Posterior cingulate gyrus (tissue), 11 donors: ENCODE measurements at regions of chr15 and their contacts with region 1.

Region 1: GRCh38 chr15:43872416-43873020 is 45.7 kb downstream of the WDR76 start:
- DNase-seq: peak in 6 of 10 donors; percentile 34 to 91 (median 59)

Region 2: DNA sequence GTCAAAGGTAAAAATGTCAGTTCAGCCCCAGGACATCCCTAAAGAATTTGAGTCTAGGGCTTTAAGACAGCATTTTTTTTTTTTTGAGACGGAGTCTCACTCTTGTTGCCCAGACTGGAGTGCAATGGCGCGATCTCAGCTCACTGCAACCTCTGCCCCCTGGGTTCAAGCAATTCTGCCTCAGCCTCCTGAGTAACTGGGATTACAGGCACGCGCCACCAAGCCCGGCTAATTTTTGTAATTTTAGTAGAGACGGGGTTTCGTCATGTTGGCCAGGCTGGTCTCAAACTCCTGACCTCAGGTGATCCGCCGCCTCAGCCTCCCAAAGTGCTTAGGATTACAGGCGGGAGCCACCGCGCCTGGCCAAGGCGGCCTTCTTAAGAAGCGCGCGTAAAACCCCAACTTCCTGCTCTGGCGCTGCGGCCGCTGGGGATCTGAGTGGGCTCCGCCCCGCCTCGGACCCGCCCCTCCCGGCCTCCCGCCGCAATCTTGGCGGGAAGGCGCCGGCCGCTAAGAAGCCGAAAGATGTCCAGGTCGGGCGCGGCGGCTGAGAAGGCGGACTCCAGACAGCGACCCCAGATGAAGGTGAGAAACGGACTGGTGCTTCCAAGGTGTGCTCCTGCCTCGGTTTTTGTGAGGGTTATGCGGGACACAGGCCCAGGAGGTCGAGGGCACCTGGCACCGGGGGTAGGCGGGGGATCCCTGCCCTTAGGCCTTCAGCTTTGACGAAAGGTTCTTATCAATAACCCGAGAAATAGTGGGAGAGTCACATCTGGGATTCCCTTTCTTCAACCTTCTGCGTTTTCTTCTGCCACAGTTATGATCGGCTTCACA is 45.8 kb before region 1 on chr15 and contains the start of gene WDR76:
- intact Hi-C with region 1: no loop called
- DNase-seq: peak; percentile 27 to 94 (median 56)

Region 3: GRCh38 chr15:43939070-43939469 is 66.6 kb after region 1 on chr15:
- intact Hi-C with region 1: no loop called
- DNase-seq: no peak

Region 4: DNA sequence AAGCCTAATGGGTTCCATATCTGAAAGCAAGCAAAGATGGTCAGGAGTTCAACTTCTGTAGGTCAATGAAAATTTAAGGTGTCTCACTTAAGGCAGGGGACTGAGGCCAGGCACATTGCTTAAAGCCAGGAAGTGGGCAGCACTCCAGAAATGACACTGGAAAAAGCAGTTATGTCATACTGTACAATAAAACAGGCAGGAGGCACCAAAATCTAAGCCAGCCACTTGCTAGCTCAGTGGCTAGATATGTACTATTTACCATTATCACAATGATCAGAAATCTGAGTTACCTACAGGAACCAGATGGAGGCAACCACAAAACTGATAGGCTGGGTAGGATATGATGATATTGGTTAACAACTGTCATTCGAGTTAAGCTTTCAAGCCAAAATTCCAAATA is 265.2 kb after region 1 on chr15:
- intact Hi-C with region 1: loop called (anchors 10 kb)
- DNase-seq: no peak

Region 5: GRCh38 chr15:44219073-44219472 is 346.6 kb after region 1 on chr15:
- intact Hi-C with region 1: loop called (anchors 1 kb)
- DNase-seq: no peak